ENCODE measurements at regions of chr7 and their contacts with region 1.

Region 1: GRCh38 chr7:92447345-92448204 is at the start of gene GATAD1:
- DNase-seq: peak; percentile 96 to 98 (median 97)
- ATAC-seq: peak; percentile 95
- H3K4me3 ChIP-seq: peak within 1 kb of the TSS; percentile 95
- H3K27ac ChIP-seq: peak within 1 kb of the TSS; percentile 95
- H3K4me1 ChIP-seq: peaks cover 5 to 6% of the 10 kb centered on the region in 2 experiments; a peak in 2 of 5 replicates
- H3K27me3 ChIP-seq: no peaks in the 10 kb centered on the region
- CTCF ChIP-seq: peak in 2 of 3 experiments; percentile 95 to 98; a peak in 5 of 6 replicates
- EP300 ChIP-seq: peak; percentile 63
- POLR2A ChIP-seq: peak; percentile 95
- RAD21 ChIP-seq: no peak
- polyA plus RNA-seq, gene GATAD1: 9.3 to 9.4 TPM

Region 2: GRCh38 chr7:91310830-91311460 is 1136.6 kb before region 1 on chr7:
- CTCF ChIA-PET with region 1: no interaction called
- POLR2A ChIA-PET with region 1: no interaction called
- in situ Hi-C with region 1: no loop called
- intact Hi-C with region 1: no loop called
- DNase-seq: no peak
- ATAC-seq: peak; percentile 76
- H3K4me3 ChIP-seq: no peak overlapping the region
- H3K27ac ChIP-seq: no peak overlapping the region
- H3K4me1 ChIP-seq: peaks cover 3% of the 10 kb centered on the region in 2 experiments; a peak in 3 of 5 replicates
- H3K27me3 ChIP-seq: no peaks in the 10 kb centered on the region
- CTCF ChIP-seq: no peak
- EP300 ChIP-seq: no peak
- POLR2A ChIP-seq: no peak
- RAD21 ChIP-seq: no peak

Region 3: DNA sequence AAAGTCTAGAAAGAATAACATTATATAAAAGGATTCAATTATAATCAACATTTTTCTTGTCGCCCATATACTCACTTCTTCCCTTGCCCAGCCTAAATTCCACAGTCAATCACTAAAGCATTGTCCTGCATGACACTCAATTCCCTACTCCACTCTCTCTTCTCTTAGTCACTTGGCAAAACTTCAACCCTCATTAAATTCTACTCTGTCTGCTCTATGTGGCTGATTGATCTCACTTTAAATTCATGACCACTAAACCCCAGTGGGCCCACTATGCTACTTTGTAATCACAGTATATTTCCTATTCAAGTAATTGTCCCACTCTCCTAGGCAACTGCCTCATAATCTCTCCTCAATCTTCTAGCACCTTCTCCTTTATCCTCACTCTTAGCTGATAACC is 621.2 kb before region 1 on chr7:
- CTCF ChIA-PET with region 1: interaction called, 7 read pairs
- POLR2A ChIA-PET with region 1: interaction called, 6 read pairs
- in situ Hi-C with region 1: no loop called
- intact Hi-C with region 1: loop called (anchors 1 kb)
- DNase-seq: no peak
- ATAC-seq: no peak
- H3K4me3 ChIP-seq: no peak overlapping the region
- H3K27ac ChIP-seq: no peak overlapping the region
- H3K4me1 ChIP-seq: no peaks in the 10 kb centered on the region
- H3K27me3 ChIP-seq: peaks cover 0 to under 1% of the 10 kb centered on the region in 2 experiments; a peak in 1 of 5 replicates
- CTCF ChIP-seq: no peak
- EP300 ChIP-seq: no peak
- POLR2A ChIP-seq: no peak
- RAD21 ChIP-seq: no peak

Region 4: DNA sequence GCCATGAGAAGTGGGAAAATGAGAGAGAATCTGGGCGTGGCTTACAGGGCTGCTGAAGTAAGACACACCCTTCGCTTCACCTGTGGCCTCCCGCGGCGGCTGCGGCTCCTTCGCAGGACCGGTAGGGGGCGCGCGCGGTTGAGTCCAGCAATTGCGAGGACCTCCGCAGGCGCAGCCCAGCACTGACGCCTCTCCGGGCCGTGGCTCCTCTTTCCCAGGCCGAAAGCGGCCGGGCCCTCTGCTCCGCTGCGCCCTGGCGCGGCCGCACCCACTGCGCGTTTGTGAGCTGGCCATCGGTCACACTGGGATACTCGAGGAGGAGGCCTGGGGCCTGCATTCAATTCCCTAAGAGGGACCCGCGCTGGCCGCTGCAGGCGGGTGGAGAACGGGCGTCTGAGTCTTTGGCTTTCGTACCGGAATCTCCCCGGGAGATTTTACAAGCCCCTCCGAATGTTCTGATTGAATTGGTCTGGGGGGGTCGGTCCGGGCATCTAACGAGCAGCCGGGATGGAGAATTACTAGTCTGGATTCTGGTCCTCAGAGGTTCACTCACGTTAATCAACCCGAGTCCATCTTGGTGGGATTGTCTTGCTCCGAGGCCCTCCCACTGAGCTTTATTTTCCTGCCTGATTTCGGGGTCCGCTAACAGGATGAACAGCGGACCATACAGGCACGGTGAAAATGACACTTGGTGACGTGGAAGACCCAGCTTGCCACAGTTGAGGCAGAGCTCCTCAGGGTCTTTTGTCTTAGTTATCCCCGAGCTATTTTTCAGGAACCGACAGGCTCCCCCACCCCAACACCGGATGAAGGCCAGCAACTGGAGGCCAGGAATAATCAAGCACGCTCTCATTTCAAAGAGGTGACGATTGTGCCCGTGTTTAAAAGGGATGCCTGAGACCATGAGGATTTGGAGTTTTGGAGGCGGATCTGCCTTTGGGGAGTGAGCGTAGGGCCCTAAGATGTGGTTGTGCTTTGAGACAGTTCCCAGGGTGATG is 268.3 kb before region 1 on chr7 and contains the start of gene LRRD1:
- CTCF ChIA-PET with region 1: no interaction called
- POLR2A ChIA-PET with region 1: no interaction called
- in situ Hi-C with region 1: no loop called
- intact Hi-C with region 1: loop called (anchors 2 kb)
- DNase-seq: peak; percentile 66 to 72 (median 70)
- ATAC-seq: peak; percentile 100
- H3K4me3 ChIP-seq: no peak within 1 kb of the TSS
- H3K27ac ChIP-seq: no peak within 1 kb of the TSS
- H3K4me1 ChIP-seq: peaks cover 0 to 5% of the 10 kb centered on the region in 2 experiments; a peak in 1 of 5 replicates
- H3K27me3 ChIP-seq: no peaks in the 10 kb centered on the region; a peak in 1 of 5 replicates
- CTCF ChIP-seq: peak; percentile 67 to 98 (median 78)
- EP300 ChIP-seq: no peak
- POLR2A ChIP-seq: no peak
- RAD21 ChIP-seq: peak in 1 of 2 experiments; percentile 32; a peak in 2 of 4 replicates
- polyA plus RNA-seq, gene LRRD1: not detected

Region 5: DNA sequence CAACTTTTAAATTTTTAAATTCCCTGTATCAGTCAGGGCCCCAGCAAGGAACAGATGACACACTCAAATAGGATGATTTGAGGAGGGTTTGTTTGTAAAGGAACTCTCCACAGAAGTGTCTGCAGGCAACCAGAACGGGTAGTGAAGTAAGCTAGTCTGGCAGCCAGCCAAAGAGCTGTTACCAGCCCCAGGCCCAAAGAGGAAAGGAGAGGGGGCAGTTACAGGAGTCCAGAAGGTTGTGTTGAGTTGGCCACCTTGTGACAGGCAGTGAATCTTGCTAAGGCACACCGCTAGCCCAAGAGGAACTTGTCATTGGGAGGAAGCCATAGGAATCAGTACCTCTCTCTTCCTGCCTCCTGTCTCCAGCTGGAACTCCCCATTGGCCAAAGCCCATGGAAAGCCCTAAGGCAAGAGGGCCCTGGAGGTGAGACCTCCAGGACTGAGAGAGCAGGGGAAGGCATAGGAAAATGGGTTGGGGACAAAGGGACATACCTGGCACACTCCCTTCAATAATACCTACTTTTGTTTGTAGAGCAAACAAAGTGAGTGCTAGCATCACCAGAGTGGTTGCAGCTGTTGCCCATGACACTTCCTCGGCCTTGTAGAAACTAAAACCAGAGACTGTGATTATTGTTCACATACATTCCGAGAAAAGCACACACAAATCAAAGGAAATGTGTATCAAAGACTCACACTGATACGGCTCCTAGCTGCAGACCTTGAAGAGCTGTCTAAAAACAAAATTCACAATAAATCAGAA is 25.7 kb before region 1 on chr7:
- CTCF ChIA-PET with region 1: interaction called, 10 read pairs
- POLR2A ChIA-PET with region 1: interaction called, 13 read pairs
- in situ Hi-C with region 1: no loop called
- intact Hi-C with region 1: loop called (anchors 1 kb)
- DNase-seq: peak in 3 of 4 experiments; percentile 26 to 59 (median 33)
- ATAC-seq: no peak
- H3K4me3 ChIP-seq: no peak overlapping the region
- H3K27ac ChIP-seq: no peak overlapping the region
- H3K4me1 ChIP-seq: peaks cover 14 to 20% of the 10 kb centered on the region in 2 experiments
- H3K27me3 ChIP-seq: no peaks in the 10 kb centered on the region
- CTCF ChIP-seq: no peak
- EP300 ChIP-seq: no peak
- POLR2A ChIP-seq: no peak
- RAD21 ChIP-seq: no peak

Measured in K562 (cell line).